ENCODE measurements at regions of chr7 and their contacts with region 1.

Region 1: DNA sequence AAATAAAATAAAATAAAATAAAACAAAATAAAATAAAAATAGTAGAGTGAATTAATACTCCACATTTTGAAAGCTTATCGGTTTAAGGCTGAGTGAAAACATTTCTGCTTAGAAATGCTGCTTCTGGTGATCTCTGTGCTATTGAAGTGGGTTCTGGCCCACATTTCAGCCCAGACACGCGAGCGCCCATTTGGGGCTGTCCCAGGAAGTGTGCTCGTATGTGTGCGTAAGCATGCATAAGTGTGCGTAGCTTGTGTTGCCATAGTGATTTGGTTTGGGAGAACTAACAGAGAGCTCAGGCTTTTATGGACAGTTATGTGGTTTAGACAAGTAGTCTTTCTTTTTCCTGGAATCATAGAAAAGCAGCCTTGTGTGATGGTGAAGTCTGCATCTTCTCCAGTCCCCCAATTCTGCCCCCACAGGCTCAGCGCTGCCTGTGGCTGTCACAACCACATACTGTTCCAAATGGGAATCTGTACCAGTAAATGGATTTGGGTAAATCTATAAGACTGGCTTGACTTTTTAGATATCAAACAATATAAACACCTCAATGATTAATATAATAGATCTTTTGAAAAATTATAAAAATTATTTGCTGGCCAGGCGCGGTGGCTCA is 29.8 kb upstream of the PURB start:
- DNase-seq: no peak
- ATAC-seq: no peak
- H3K4me3 ChIP-seq: no peak overlapping the region
- H3K27ac ChIP-seq: no peak overlapping the region
- H3K4me1 ChIP-seq: no peaks in the 10 kb centered on the region
- H3K27me3 ChIP-seq: no peaks in the 10 kb centered on the region
- CTCF ChIP-seq: no peak
- POLR2A ChIP-seq: no peak

Region 2: DNA sequence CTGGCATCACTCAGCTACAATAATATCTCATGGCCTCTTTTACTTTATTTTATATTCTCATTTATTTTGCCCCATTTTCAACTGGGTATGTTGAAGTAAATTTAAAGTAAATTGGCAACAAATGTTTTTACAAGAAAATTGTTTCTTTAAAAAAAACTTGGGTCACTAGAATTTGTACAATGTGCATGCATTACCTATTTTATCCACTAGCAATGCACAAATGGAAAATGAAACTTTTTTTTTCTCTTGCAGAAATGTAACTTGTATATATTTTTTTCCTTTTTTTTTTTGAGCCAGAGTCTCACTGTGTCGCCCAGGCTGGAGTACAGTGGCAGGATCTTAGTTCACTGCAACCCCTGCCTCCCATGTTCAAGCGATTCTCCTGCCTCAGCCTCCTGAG is 56.9 kb before region 1 on chr7:
- in situ Hi-C with region 1: loop called (anchors 5 kb)
- intact Hi-C with region 1: no loop called
- DNase-seq: no peak
- ATAC-seq: no peak
- H3K4me3 ChIP-seq: no peak overlapping the region
- H3K27ac ChIP-seq: no peak overlapping the region
- H3K4me1 ChIP-seq: no peaks in the 10 kb centered on the region
- H3K27me3 ChIP-seq: no peaks in the 10 kb centered on the region
- CTCF ChIP-seq: no peak
- POLR2A ChIP-seq: no peak

Region 3: DNA sequence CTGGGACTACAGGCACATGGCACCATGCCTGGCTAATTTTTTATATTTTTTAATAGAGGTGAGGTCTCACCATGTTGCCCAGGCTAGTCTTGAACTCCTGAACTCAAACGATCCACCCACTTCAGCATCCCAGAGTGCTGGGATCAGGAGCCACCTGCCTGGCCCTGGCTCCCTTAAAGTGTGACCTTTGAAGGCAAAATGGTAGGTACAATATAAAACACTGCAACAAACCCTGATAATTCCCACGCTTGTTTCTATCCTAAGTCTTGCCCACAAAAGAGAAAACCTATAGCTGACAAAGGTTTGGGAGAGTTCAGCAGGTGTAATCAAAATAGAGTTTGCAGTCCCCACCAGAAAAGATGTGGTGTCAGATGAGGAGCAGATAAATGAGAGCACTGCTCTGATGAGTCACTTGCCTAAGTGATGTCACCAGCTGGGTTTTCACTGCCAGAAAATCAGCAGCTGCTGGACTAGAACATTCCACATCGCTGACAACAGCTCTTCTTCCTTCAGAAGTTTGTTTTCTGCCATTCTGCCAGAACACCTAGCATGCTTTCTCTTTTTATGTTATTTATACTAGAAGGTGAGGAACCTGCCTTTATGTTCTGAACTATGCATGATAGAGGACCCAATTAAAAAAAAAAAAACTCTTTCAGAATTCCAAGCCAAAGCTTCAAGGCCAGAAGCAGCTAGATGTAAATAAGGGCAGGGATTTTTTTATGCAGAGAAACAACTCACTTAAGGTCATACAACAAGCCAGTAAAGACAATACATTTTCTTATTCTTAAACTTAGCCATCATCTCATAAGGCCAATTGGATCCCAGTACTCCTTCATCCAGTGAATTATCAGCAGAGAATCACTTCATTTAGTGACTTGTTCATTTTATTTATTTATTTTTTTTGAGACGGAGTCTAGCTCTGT is 47.8 kb before region 1 on chr7:
- in situ Hi-C with region 1: loop called in 2 of 4 experiments (anchors 5 kb)
- intact Hi-C with region 1: no loop called
- DNase-seq: peak; percentile 71 to 80
- ATAC-seq: peak; percentile 100
- H3K4me3 ChIP-seq: no peak overlapping the region
- H3K27ac ChIP-seq: peak overlapping the region; percentile 78 to 87 (median 82)
- H3K4me1 ChIP-seq: peaks cover 14 to 17% of the 10 kb centered on the region in 2 donors
- H3K27me3 ChIP-seq: no peaks in the 10 kb centered on the region
- CTCF ChIP-seq: no peak
- POLR2A ChIP-seq: no peak

Measured in gastrocnemius medialis (tissue), 4 donors.